Activated T-helper 2 cell treated with anti-CD3 and anti-CD28 coated beads, Interferon-gamma antibody, Interleukin-2, Interleukin-4, amounts not matched to agents 10 μg/mL and 5 μg/mL and 100 μg/mL, durations not matched to agents 14 hours and 24 hours and 36 hours (primary cell): ENCODE measurements at regions of chr12 and their contacts with region 1.

Region 1: DNA sequence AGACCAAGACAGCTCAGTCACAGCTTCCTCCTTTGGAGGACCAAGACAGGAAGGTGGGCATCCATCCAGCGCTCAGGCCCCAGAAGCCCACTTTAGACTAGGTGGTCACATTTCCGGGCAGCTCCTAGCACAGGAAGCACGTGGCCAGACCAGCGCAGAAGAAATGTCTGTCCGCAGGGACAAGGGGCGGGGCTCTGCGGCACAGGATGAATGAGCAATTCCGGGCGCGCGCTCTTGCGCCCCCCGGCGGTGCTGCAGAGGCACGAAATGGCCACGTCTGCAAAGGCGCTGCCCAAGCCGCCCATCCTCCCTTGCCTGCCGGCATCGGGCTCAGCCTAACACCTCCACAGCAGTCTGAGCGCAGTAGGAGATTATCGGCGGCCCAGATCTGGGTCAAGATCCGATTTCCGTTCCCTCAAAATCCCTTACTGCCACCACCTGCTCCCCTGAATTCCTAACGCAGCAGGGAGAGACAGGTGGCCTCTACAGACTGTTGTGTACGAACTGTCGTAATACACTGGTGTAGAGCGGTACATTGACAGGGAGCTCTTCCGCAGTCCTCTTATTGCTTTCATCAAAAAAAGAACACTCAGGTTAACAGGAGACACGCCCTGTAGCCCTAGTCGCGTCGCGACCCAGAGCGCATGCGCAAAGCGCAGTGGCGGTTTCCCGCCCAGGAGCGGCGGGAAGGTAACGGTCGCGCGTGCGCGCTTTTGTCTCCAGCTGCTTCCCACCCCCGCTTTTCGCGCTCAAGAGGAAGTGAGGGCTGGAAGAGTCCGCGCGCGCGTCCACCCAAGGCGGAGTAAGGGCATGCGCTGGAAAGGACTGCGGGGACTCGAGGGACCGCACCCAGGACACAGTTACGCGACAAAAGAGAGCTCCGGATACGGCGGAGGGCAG is 794 bp downstream of the TUBA1B start:
- DNase-seq: peak; percentile 92
- H3K4me3 Mint-ChIP-seq: peak overlapping the region; percentile 98
- H3K27ac Mint-ChIP-seq: peak overlapping the region; percentile 98
- H3K4me1 Mint-ChIP-seq: peaks cover 38% of the 10 kb centered on the region
- H3K27me3 Mint-ChIP-seq: no peaks in the 10 kb centered on the region

Region 2: GRCh38 chr12:49060237-49061156 is 69.9 kb before region 1 on chr12 and contains the start of gene KMT2D:
- intact Hi-C with region 1: loop called (anchors 1 kb)
- DNase-seq: peak; percentile 89
- H3K4me3 Mint-ChIP-seq: peak within 1 kb of the TSS; percentile 92
- H3K27ac Mint-ChIP-seq: peak within 1 kb of the TSS; percentile 89
- H3K4me1 Mint-ChIP-seq: peaks cover 43% of the 10 kb centered on the region
- H3K27me3 Mint-ChIP-seq: no peaks in the 10 kb centered on the region
- total RNA-seq, gene KMT2D: 93.3 and 100 TPM in 2 replicates

Region 3: DNA sequence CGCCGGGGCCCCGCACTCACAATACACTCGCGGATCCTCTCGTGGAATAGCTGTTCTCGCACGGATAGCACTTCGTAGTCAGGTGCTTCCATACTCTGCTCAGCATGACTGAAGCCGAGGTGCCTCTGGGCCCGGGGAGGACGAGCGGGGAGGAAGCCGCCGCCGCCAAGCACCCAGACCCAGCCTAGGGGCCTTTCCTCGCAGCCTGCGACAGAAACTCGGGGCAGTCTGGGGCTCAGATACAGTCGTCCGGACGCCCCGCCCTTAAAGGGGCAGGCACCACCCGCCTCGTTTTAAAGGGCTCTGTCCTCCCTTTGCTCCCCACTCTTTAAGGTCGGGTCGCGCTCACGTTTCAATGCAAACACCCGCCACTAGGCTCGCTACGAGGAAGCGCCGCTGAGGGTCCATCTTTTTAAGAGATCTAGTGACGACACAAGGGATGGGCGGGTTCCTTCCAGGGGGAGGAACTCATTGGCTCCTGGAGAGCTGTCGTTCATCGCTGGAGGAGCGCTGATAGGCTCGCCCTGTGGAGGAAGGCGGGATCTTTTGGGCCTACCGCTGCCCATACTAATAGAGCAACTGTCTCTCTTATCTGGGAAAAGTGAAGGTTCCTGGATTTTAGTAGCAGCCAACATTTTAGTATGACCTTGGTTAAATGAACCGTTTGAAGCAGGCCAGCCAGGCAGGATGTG is 19.8 kb before region 1 on chr12 and contains the start of gene LMBR1L:
- intact Hi-C with region 1: loop called (anchors 1 kb)
- DNase-seq: peak; percentile 94
- H3K4me3 Mint-ChIP-seq: peak within 1 kb of the TSS; percentile 97
- H3K27ac Mint-ChIP-seq: peak within 1 kb of the TSS; percentile 91
- H3K4me1 Mint-ChIP-seq: peaks cover 22% of the 10 kb centered on the region
- H3K27me3 Mint-ChIP-seq: peaks cover 2% of the 10 kb centered on the region
- total RNA-seq, gene LMBR1L: 47.1 and 53.5 TPM in 2 replicates

Region 4: GRCh38 chr12:49232940-49233841 is 102.8 kb after region 1 on chr12:
- intact Hi-C with region 1: loop called (anchors 2 kb)
- DNase-seq: no peak
- H3K4me3 Mint-ChIP-seq: peak overlapping the region; percentile 37
- H3K27ac Mint-ChIP-seq: peak overlapping the region; percentile 73
- H3K4me1 Mint-ChIP-seq: peaks cover 16% of the 10 kb centered on the region
- H3K27me3 Mint-ChIP-seq: peaks cover 8% of the 10 kb centered on the region

Region 5: GRCh38 chr12:49322708-49323523 is 192.5 kb after region 1 on chr12 and contains the start of gene TROAP:
- intact Hi-C with region 1: loop called (anchors 2 kb)
- DNase-seq: peak; percentile 98
- H3K4me3 Mint-ChIP-seq: peak within 1 kb of the TSS; percentile 99
- H3K27ac Mint-ChIP-seq: peak within 1 kb of the TSS; percentile 82
- H3K4me1 Mint-ChIP-seq: peaks cover 13% of the 10 kb centered on the region
- H3K27me3 Mint-ChIP-seq: peaks cover 3% of the 10 kb centered on the region
- total RNA-seq, gene TROAP: 58.3 and 59.3 TPM in 2 replicates